ENCODE measurements at regions of chr19 and their contacts with region 1.

Region 1: DNA sequence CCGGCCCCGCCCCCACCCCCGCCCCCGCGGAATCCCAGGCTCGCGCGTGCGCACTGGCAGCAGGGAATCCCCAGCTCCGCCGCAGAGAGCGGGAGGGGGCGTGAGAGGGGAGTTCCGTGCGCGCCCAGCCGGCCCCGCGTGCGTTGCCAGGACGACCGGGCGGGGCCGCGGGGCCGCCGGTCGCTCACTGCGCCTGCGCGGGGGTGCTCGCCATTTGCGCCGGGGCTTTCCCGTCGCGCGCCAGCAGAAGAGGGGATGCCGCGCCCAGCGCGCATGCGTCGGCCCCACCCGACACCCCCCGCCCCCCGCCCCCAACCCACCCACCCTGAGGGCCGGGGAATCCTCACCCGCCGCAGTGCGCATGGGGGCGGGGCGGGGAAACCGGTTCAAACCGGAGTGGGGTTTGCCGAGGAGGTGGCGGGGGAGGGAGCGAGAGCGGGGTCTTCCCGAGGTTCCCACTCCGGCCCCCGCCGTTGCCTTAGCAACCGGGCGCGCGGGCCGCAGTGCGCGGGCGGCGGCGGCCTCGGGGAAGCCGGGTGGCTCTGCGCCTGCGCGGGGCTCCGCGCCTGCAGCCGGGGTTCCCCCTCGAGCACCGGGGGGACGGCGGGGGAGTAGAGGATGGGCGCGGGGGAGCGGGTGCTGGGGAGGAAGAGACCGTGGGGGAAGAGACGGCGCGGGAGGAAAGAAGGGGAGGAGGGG is 15.1 kb downstream of the CCDC124 start:
- DNase-seq: peak; percentile 97
- ATAC-seq: peak; percentile 64
- H3K4me3 ChIP-seq: peak overlapping the region in 4 of 5 experiments; percentile 46 to 63 (median 58)
- H3K4me3 Mint-ChIP-seq: peak overlapping the region; percentile 88
- H3K27ac ChIP-seq: peak overlapping the region; percentile 55 to 94
- H3K27ac Mint-ChIP-seq: peak overlapping the region; percentile 56
- H3K4me1 ChIP-seq: peaks cover 53 to 61% of the 10 kb centered on the region in 2 donors
- H3K4me1 Mint-ChIP-seq: peaks cover 53% of the 10 kb centered on the region
- H3K27me3 ChIP-seq: peaks cover 0 to 40% (median 27%) of the 10 kb centered on the region in 4 experiments
- H3K27me3 Mint-ChIP-seq: peaks cover 15% of the 10 kb centered on the region
- CTCF ChIP-seq: no peak

Region 2: GRCh38 chr19:17973759-17974158 is 25.8 kb after region 1 on chr19:
- CTCF ChIA-PET with region 1: interaction called, 3 read pairs
- POLR2A ChIA-PET with region 1: interaction called, 3 read pairs
- intact Hi-C with region 1: loop called (anchors 2 kb)
- DNase-seq: no peak
- ATAC-seq: no peak
- H3K4me3 ChIP-seq: no peak overlapping the region
- H3K4me3 Mint-ChIP-seq: no peak overlapping the region
- H3K27ac ChIP-seq: no peak overlapping the region
- H3K27ac Mint-ChIP-seq: no peak overlapping the region
- H3K4me1 ChIP-seq: no peaks in the 10 kb centered on the region
- H3K4me1 Mint-ChIP-seq: peaks cover under 1% of the 10 kb centered on the region
- H3K27me3 ChIP-seq: peaks cover 0 to under 1% (median 0%) of the 10 kb centered on the region in 4 experiments
- H3K27me3 Mint-ChIP-seq: peaks cover 3% of the 10 kb centered on the region
- CTCF ChIP-seq: no peak

Region 3: DNA sequence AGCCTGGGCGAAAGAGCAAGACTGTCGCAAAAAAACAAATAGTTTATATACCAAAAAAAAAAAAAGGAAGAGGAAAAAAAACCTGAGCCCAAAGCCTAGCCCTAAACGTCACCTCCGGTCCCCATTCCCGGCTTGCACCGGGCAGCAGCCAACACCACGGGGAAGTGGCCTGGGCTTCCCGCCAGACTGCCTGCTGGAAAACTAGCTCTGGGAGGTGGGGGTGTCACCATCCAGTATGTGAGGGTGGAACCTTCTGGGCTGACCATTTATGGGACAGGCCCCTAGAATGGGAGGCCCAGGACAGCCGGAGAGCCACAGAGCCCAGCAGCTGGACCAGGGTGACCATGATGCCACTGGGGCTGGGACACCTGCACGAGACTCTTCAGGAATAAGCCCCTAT is 101.4 kb after region 1 on chr19:
- CTCF ChIA-PET with region 1: no interaction called
- POLR2A ChIA-PET with region 1: no interaction called
- intact Hi-C with region 1: no loop called
- DNase-seq: no peak
- ATAC-seq: no peak
- H3K4me3 ChIP-seq: no peak overlapping the region
- H3K4me3 Mint-ChIP-seq: no peak overlapping the region
- H3K27ac ChIP-seq: no peak overlapping the region
- H3K27ac Mint-ChIP-seq: no peak overlapping the region
- H3K4me1 ChIP-seq: peaks cover 16 to 27% of the 10 kb centered on the region in 2 donors
- H3K4me1 Mint-ChIP-seq: peaks cover 36% of the 10 kb centered on the region
- H3K27me3 ChIP-seq: no peaks in the 10 kb centered on the region
- H3K27me3 Mint-ChIP-seq: no peaks in the 10 kb centered on the region
- CTCF ChIP-seq: no peak